AG04449 (cell line): ENCODE measurements at regions of chr10 and their contacts with region 1.

Region 1: DNA sequence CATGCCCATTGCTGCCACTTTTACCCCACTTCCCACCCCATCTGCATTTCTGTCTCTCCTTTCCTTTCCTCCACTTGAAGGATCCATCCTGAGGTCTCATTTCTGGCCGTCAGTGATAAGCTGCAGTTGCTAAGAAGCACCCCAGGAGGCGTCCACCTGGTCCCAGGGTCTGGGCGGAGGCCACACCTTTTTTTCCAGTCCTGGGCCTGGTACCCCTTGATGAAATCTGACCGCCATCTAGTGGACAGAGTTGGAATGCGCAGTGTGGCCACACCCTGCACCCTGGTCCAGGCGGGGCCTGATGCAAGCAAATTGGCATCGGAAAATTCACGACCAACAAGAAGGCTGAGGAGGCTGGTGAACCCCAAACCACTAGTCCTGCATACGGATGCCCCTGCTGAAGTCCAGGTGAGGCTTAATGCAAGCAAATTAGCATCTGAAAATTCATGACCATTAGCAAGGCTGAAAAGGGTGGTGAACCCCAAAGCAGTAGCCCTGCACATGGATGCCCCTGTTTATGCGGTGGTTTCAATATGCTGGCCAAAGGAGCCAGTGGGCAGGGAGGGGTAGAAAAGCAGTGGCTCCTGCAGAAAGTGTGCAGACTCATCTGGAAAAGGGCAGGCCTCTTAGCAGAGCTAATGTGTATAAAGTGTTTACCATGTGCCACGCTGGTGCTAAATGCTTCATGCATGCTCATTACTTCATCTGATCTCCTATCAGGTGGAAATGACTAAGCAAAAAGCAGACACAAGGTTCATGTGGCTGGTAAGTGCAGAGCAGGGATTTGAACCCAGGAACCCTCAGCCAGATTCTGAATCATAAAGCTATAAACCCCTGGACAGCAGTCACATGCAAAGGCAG is 43.2 kb downstream of the GPAM start:
- DNase-seq: no peak
- H3K4me3 ChIP-seq: no peak overlapping the region
- CTCF ChIP-seq: peak; percentile 87

Region 2: DNA sequence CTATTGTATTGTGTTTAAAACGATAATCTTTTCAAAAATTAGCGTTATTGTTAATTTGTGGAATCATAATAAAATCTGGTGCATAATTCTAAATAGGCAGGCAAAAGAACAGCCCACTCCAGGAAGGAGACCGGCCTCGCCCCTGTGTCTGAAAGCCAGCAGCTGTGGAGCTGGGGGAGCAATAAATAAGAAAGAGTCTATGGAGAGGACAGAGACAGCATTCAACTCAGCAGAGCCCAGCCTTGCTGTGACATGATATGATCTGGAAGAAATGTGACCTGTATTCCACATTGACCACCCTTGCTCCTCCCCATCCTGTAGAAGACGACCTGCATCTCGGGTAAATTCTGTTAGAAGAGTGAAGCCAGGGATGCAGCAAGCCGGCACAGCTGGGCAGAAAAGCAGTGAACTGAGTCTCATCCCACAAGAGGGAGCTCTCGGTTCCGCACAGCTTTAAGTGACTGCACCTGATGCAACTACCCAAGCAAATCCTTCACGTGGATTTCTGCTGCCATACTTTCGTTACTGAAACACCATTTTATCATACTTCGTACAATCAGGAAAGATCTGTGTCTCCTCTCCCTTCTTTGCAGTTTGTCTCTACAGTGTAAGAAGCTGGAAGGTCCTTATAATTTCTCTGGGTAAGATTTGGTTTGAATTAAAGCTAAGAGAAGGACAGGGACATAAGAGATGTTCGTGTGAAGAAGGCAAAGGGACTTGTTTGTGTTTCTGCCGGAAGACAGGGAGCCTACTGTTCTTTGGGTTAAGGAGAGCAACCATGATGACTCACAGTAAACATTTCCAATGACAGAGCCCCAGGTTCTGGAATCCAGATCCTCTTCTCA is 383.9 kb before region 1 on chr10:
- CTCF ChIA-PET with region 1: interaction called, 14 read pairs
- POLR2A ChIA-PET with region 1: no interaction called
- DNase-seq: no peak
- H3K4me3 ChIP-seq: no peak overlapping the region
- CTCF ChIP-seq: peak; percentile 31

Region 3: GRCh38 chr10:112151524-112152039 is 11.2 kb after region 1 on chr10:
- CTCF ChIA-PET with region 1: interaction called, 154 read pairs
- POLR2A ChIA-PET with region 1: no interaction called
- DNase-seq: peak; percentile 29
- H3K4me3 ChIP-seq: no peak overlapping the region
- CTCF ChIP-seq: no peak

Region 4: DNA sequence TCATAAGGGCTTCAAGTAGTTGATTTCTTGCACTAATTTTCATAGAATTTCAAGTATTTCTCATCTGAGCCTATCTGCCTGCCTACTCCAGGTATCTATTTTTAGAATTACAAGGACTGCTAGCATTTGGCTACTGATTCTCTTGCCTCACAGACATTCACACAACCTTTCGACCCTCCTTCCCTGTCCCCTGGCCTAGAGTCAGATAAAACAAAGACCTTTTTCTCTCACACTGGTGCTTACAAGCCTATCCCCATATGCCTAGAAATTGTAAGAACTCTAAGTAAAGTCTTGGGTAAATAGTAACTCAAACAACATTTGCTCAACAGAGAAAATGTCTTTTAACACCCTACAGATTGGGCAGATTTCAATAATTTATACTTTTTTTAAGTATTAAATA is 36.9 kb after region 1 on chr10:
- CTCF ChIA-PET with region 1: interaction called, 28 read pairs
- POLR2A ChIA-PET with region 1: no interaction called
- DNase-seq: peak; percentile 19
- H3K4me3 ChIP-seq: no peak overlapping the region
- CTCF ChIP-seq: no peak

Region 5: DNA sequence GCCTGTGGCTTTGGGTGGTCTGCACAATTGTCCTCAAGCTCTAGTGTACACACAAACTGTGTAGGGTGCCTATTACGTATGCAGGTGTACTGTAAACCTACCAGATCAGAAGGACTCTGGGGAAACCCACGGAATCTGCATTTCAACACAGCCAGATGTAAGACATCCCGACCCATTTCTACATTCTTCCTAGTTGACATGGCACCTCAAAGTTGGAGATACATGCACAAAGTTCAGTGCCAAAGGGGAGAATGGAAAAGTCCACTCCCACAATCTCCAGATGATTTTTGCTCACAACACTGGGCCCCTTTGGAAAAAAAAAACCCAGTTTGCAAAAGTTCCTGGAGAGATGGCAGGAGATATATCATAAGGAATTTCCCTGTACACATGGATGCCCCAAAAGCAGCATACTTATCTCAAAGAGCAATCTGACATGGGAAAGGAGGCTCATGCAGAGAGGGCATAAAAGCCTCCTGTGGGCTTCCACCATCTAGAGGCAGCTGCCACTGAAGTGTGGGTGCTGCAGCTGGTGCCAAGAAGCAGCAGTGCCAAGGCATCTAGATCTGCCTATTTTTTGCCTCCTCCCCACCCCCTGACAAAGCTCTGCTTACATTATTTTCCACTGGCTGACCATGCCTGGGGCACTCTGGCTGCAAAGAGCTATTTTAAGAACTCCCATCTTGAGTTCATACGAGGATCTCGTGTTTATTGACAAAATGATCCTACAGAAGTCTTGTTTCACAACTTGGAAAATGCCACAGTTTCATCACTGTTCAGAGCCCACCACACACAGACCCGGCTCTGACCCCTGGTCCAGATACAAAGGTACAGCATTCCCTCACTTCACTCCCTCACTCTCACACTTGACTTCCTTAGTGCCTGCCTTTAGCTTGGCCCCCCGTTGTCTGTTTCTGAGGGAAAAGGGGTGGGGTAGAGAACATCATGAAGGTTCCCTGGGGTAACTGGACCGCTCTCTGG is 155.8 kb after region 1 on chr10:
- CTCF ChIA-PET with region 1: interaction called, 12 read pairs
- POLR2A ChIA-PET with region 1: no interaction called
- DNase-seq: peak; percentile 42
- H3K4me3 ChIP-seq: no peak overlapping the region
- CTCF ChIP-seq: no peak

Region 6: GRCh38 chr10:112327678-112328077 is 187.3 kb after region 1 on chr10:
- CTCF ChIA-PET with region 1: interaction called, 15 read pairs
- POLR2A ChIA-PET with region 1: no interaction called
- DNase-seq: no peak
- H3K4me3 ChIP-seq: no peak overlapping the region
- CTCF ChIP-seq: no peak